ENCODE measurements at regions of chr1 and their contacts with region 1.

Region 1: DNA sequence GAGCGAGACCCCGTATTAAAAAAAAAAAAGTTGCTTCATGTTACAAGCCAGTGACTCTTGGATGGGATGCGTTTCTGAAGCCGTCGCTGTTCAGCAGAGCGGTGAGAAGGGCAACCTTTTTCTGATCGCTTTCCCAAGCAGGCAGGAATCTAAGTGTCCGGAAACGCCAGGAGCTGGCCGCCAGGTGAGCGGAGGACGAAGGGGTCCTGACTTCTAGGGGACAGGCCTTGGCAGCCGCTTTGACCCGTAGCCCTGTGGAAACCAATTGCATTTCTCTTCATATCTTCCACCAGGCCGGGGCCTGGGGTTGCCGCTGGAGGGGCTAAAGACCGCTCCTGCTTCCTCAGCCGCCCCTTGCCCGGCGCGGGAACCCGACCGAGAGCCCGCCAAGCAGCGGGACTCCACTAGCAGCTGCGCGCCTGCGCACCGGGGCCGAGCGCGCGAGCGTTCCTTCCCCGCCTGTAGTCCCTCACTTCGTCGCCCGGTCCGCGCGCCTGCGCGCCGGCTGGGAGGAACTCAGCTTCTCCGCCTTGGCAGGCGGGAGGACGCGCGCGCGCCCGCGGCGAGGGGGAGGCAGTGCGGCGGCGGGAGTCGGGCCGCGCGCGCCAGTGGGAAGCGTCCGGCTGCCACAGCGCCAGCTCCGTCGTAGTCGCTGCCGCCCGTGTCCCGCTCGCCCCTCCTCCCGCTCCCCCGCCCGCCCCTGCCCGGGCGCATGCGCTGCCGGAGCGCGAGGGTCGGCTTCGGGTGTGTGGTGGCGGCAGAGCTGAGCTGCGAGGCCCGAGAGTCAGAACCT is at the start of gene SPEN:
- DNase-seq: peak; percentile 96 to 98
- H3K4me3 ChIP-seq: peak within 1 kb of the TSS; percentile 75
- H3K4me3 Mint-ChIP-seq: peak within 1 kb of the TSS; percentile 95
- H3K27ac Mint-ChIP-seq: peak within 1 kb of the TSS; percentile 95
- H3K4me1 ChIP-seq: peaks cover 14% of the 10 kb centered on the region
- H3K4me1 Mint-ChIP-seq: no peaks in the 10 kb centered on the region
- H3K27me3 ChIP-seq: no peaks in the 10 kb centered on the region
- H3K27me3 Mint-ChIP-seq: no peaks in the 10 kb centered on the region
- CTCF ChIP-seq: no peak
- total RNA-seq, gene SPEN: 46.4 and 47.3 TPM in 2 replicates

Region 2: GRCh38 chr1:15345711-15346355 is 501.5 kb before region 1 on chr1:
- CTCF ChIA-PET with region 1: no interaction called
- POLR2A ChIA-PET with region 1: no interaction called
- intact Hi-C with region 1: no loop called
- DNase-seq: no peak
- H3K4me3 ChIP-seq: no peak overlapping the region
- H3K4me3 Mint-ChIP-seq: no peak overlapping the region
- H3K27ac Mint-ChIP-seq: no peak overlapping the region
- H3K4me1 ChIP-seq: no peaks in the 10 kb centered on the region
- H3K4me1 Mint-ChIP-seq: no peaks in the 10 kb centered on the region
- H3K27me3 ChIP-seq: no peaks in the 10 kb centered on the region
- H3K27me3 Mint-ChIP-seq: no peaks in the 10 kb centered on the region
- CTCF ChIP-seq: no peak

Region 3: GRCh38 chr1:15788624-15789301 is 58.5 kb before region 1 on chr1:
- CTCF ChIA-PET with region 1: interaction called, 7 read pairs
- POLR2A ChIA-PET with region 1: interaction called, 7 read pairs
- intact Hi-C with region 1: loop called (anchors 1 kb)
- DNase-seq: no peak
- H3K4me3 ChIP-seq: no peak overlapping the region
- H3K4me3 Mint-ChIP-seq: no peak overlapping the region
- H3K27ac Mint-ChIP-seq: peak overlapping the region; percentile 71
- H3K4me1 ChIP-seq: peaks cover 44% of the 10 kb centered on the region
- H3K4me1 Mint-ChIP-seq: peaks cover 33% of the 10 kb centered on the region
- H3K27me3 ChIP-seq: no peaks in the 10 kb centered on the region
- H3K27me3 Mint-ChIP-seq: no peaks in the 10 kb centered on the region
- CTCF ChIP-seq: no peak

Region 4: GRCh38 chr1:15803354-15803753 is 43.9 kb before region 1 on chr1:
- CTCF ChIA-PET with region 1: no interaction called
- POLR2A ChIA-PET with region 1: interaction called, 6 read pairs
- intact Hi-C with region 1: loop called (anchors 2 kb)
- DNase-seq: no peak
- H3K4me3 ChIP-seq: no peak overlapping the region
- H3K4me3 Mint-ChIP-seq: no peak overlapping the region
- H3K27ac Mint-ChIP-seq: no peak overlapping the region
- H3K4me1 ChIP-seq: peaks cover 35% of the 10 kb centered on the region
- H3K4me1 Mint-ChIP-seq: peaks cover 45% of the 10 kb centered on the region
- H3K27me3 ChIP-seq: no peaks in the 10 kb centered on the region
- H3K27me3 Mint-ChIP-seq: no peaks in the 10 kb centered on the region
- CTCF ChIP-seq: peak; percentile 31 to 41

Region 5: GRCh38 chr1:16073490-16074119 is 226.3 kb after region 1 on chr1 and contains the start of gene FAM131C:
- CTCF ChIA-PET with region 1: no interaction called
- POLR2A ChIA-PET with region 1: no interaction called
- intact Hi-C with region 1: no loop called
- DNase-seq: peak in 1 of 2 experiments; percentile 54
- H3K4me3 ChIP-seq: peak within 1 kb of the TSS; percentile 46
- H3K4me3 Mint-ChIP-seq: peak within 1 kb of the TSS; percentile 67
- H3K27ac Mint-ChIP-seq: no peak within 1 kb of the TSS
- H3K4me1 ChIP-seq: no peaks in the 10 kb centered on the region
- H3K4me1 Mint-ChIP-seq: no peaks in the 10 kb centered on the region
- H3K27me3 ChIP-seq: no peaks in the 10 kb centered on the region
- H3K27me3 Mint-ChIP-seq: no peaks in the 10 kb centered on the region
- CTCF ChIP-seq: peak in 1 of 2 experiments; percentile 23
- total RNA-seq, gene FAM131C: 0.41 and 0.44 TPM in 2 replicates

Measured in Caco-2 (cell line).